MCF 10A (cell line): ENCODE measurements at regions of chr5 and their contacts with region 1.

Region 1: GRCh38 chr5:155943516-155944407 is 383.2 kb upstream of the SGCD start:
- DNase-seq: peak; percentile 5
- H3K4me3 Mint-ChIP-seq: no peak overlapping the region
- H3K27ac Mint-ChIP-seq: no peak overlapping the region
- H3K4me1 Mint-ChIP-seq: peaks cover 10% of the 10 kb centered on the region
- H3K27me3 Mint-ChIP-seq: peaks cover 16% of the 10 kb centered on the region
- CTCF ChIP-seq: peak; percentile 99

Region 2: GRCh38 chr5:155807884-155808576 is 135.7 kb before region 1 on chr5:
- CTCF ChIA-PET with region 1: no interaction called
- POLR2A ChIA-PET with region 1: no interaction called
- intact Hi-C with region 1: no loop called
- DNase-seq: no peak
- H3K4me3 Mint-ChIP-seq: no peak overlapping the region
- H3K27ac Mint-ChIP-seq: no peak overlapping the region
- H3K4me1 Mint-ChIP-seq: no peaks in the 10 kb centered on the region
- H3K27me3 Mint-ChIP-seq: no peaks in the 10 kb centered on the region
- CTCF ChIP-seq: no peak

Region 3: DNA sequence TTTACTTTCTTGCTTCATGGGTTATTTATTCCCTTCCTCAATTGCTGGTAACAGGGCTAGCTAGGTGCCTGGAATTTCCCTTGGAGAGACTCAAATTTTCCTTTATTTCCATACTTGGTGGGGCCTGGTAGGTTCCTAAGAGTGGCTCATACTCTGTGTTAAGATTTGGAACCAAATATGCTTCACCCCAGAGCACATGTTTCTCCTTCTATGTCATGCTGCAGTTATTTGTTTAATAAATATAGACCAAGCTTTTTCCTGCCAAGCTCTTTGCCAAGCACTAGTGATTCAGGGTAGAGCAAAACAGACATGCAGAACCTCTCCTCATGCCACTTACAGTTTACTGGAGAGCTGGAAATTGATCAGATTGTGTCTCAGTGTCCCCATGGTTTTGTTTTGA is 92.9 kb after region 1 on chr5:
- CTCF ChIA-PET with region 1: interaction called, 10 read pairs
- POLR2A ChIA-PET with region 1: no interaction called
- intact Hi-C with region 1: no loop called
- DNase-seq: no peak
- H3K4me3 Mint-ChIP-seq: no peak overlapping the region
- H3K27ac Mint-ChIP-seq: no peak overlapping the region
- H3K4me1 Mint-ChIP-seq: no peaks in the 10 kb centered on the region
- H3K27me3 Mint-ChIP-seq: no peaks in the 10 kb centered on the region
- CTCF ChIP-seq: no peak

Region 4: DNA sequence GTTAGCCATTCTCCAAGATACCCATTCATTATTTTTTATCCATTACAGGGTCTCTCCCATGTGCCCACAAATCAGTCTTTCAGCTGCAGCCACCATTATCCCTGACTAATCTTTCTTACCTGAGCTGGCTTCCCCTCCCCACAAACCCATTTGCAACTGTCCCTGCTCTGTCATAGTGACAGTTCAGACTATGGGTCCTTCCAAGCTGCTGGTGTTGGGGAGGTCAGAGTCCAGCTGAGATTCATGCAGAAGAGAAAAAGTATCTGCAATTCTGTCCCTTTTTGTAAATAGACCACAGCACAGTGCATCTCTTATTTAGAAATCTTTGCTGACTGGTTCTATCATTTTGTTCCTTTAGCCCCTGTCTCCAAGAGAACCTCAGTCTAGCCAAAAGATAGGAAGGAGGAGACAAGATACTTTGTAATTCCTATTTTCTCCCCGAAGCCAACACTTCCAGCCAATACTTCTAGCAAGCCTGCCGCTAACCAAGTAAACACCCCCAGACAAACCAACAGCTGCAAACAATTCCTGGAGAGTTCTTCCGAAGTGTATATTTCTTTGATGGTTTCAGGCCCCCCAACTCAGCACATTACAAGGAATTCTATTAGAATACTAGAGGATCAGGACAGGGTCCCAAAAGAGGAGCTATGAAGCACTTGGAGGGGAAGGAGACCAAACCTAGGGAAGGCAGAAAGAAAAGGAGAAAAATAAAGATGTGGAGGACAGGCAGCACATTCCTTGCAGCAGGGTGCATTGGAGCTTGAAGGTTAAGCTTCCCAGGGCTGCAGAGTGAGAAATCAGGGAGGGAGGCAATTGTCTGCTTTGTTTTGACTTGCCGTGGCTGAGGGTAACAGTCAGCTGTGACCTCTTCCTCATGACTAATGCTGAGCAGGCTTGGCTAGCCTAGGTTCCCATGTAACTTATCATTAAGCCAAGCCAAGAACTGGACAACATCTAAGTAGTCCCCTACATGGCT is 531.7 kb after region 1 on chr5:
- CTCF ChIA-PET with region 1: interaction called, 10 read pairs
- POLR2A ChIA-PET with region 1: no interaction called
- intact Hi-C with region 1: loop called (anchors 10 kb)
- DNase-seq: peak; percentile 94
- H3K4me3 Mint-ChIP-seq: peak overlapping the region; percentile 13
- H3K27ac Mint-ChIP-seq: peak overlapping the region; percentile 84
- H3K4me1 Mint-ChIP-seq: peaks cover 59% of the 10 kb centered on the region
- H3K27me3 Mint-ChIP-seq: no peaks in the 10 kb centered on the region
- CTCF ChIP-seq: no peak

Region 5: DNA sequence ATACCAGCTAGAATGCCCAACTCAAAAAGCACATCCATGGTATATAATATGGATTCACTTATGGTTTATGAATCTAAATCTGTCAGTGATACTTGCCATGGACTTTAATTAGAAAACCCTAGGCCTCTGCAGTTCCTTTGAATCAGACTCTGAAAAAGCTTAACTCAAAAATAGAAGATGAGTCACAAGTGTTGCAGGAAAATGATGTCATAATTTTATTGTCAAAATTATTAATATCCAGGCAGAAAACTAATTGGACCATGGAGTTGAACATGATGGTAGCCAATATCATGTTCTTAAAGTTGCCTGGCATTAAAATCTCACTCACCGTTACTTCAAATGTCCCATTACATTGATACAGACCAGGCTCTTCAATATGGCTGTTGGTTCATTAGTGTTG is 796.1 kb after region 1 on chr5:
- CTCF ChIA-PET with region 1: interaction called, 4 read pairs
- POLR2A ChIA-PET with region 1: no interaction called
- intact Hi-C with region 1: loop called (anchors 2 kb)
- DNase-seq: no peak
- H3K4me3 Mint-ChIP-seq: no peak overlapping the region
- H3K27ac Mint-ChIP-seq: no peak overlapping the region
- H3K4me1 Mint-ChIP-seq: peaks cover 5% of the 10 kb centered on the region
- H3K27me3 Mint-ChIP-seq: no peaks in the 10 kb centered on the region
- CTCF ChIP-seq: no peak

Region 6: DNA sequence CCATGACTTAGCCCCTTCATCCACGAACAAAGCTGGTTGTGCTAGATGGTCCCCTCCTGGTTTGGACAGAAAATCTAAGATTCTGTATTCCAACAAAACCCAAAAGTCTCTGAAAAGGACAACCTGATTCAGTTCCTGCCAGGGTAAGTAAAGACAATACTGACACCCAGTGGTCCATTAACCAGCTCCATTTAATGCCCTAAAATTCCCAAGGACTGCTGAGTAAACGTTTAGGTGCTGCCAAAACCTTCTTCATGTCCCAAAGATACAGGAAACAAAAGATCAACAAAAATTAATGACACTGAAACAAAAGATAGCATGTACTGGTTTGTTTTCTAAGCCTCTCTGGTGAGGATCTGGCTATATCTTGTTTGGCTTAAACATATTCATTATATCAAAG is 881.0 kb after region 1 on chr5:
- CTCF ChIA-PET with region 1: interaction called, 42 read pairs
- POLR2A ChIA-PET with region 1: no interaction called
- intact Hi-C with region 1: loop called (anchors 2 kb)
- DNase-seq: peak; percentile 8
- H3K4me3 Mint-ChIP-seq: no peak overlapping the region
- H3K27ac Mint-ChIP-seq: no peak overlapping the region
- H3K4me1 Mint-ChIP-seq: peaks cover 4% of the 10 kb centered on the region
- H3K27me3 Mint-ChIP-seq: no peaks in the 10 kb centered on the region
- CTCF ChIP-seq: peak; percentile 84

Region 7: DNA sequence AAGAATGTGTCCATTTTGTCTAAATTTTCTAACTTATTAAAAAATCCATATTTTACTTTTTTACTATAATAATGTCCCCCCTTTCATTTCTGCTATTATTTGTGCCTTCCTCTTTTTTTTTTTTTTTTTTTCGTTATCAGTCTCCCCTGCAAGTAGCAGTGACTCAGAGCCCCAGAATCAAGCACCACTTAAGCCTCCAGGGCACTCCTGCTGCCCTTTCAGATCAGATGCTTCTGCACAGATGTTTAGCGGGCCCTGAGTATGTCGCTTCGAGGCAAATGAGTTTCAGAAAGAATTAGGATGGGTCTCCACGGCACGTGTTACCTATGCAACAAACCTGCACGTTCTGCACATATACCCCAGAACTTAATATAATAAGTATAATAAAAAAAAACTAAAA is 1187.2 kb after region 1 on chr5:
- CTCF ChIA-PET with region 1: interaction called, 18 read pairs
- POLR2A ChIA-PET with region 1: no interaction called
- intact Hi-C with region 1: loop called (anchors 2 kb)
- DNase-seq: no peak
- H3K4me3 Mint-ChIP-seq: no peak overlapping the region
- H3K27ac Mint-ChIP-seq: no peak overlapping the region
- H3K4me1 Mint-ChIP-seq: no peaks in the 10 kb centered on the region
- H3K27me3 Mint-ChIP-seq: no peaks in the 10 kb centered on the region
- CTCF ChIP-seq: no peak